ENCODE measurements at regions of chr12 and their contacts with region 1.

Region 1: GRCh38 chr12:93279565-93280412 is 97.9 kb upstream of the NUDT4 start:
- DNase-seq: peak; percentile 37
- ATAC-seq: peak; percentile 56
- H3K4me3 ChIP-seq: no peak overlapping the region
- H3K27ac ChIP-seq: no peak overlapping the region
- H3K4me1 ChIP-seq: peaks cover 1% of the 10 kb centered on the region; the same call in 1 of the 2 replicates
- H3K27me3 ChIP-seq: no peaks in the 10 kb centered on the region
- CTCF ChIP-seq: no peak
- POLR2A ChIP-seq: no peak
- RAD21 ChIP-seq: no peak

Region 2: GRCh38 chr12:93135286-93136239 is 144.2 kb before region 1 on chr12:
- CTCF ChIA-PET with region 1: no interaction called
- POLR2A ChIA-PET with region 1: interaction called, 14 read pairs
- dilution Hi-C with region 1: no loop called
- in situ Hi-C with region 1: no loop called
- intact Hi-C with region 1: no loop called
- DNase-seq: peak; percentile 57
- ATAC-seq: peak; percentile 86
- H3K4me3 ChIP-seq: no peak overlapping the region
- H3K27ac ChIP-seq: peak overlapping the region; percentile 40; the same call in 1 of the 2 replicates
- H3K4me1 ChIP-seq: peaks cover 6% of the 10 kb centered on the region
- H3K27me3 ChIP-seq: no peaks in the 10 kb centered on the region
- CTCF ChIP-seq: no peak
- POLR2A ChIP-seq: no peak
- RAD21 ChIP-seq: no peak